ENCODE measurements at regions of chr16 and their contacts with region 1.

Region 1: DNA sequence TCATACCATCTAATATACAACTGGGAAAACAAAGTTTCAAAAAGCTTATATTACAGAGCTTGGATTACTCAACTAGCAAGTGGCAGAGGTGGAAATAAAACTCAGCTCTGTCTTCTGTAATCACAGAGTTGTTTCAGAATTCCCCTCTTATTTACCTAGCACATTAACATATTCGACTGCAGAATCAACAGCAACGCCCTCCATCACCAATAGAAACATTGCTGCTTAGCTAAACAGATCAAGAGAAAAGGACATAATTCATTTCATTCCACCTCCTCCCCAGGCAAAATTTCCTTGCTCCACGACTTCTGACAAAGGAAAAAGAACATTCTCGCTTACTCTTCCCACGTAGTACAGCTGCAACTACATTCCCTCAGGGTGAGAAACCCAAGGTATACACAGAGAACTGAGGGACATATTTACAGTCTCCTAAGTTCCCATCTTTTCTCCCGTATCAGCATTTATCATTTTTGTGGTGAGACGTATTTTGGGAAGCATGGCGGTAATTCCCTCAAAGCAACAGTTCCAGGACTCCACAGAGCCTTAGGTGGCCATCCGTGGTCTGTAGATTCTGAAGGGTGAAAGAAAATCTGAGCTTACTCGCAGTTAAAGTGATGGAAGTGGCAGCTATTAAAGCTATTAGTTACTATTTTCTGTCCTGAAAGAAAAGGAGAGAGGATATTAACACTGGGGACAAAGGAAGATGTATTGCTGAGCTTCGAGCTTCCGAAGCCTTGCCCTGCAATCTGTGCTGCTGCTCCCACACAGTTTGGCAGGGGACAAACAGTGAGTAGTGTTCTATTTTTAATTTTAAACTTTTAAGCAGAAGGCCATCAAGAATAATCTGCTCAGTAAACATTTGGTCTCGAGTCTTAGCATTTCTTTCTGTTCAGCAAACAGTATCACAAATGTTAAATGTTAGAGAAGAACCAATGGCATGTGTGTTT is 1296.2 kb downstream of the CDH8 start:
- DNase-seq: no peak
- H3K4me3 ChIP-seq: no peak overlapping the region
- H3K27ac ChIP-seq: no peak overlapping the region
- H3K4me1 ChIP-seq: no peaks in the 10 kb centered on the region
- H3K27me3 ChIP-seq: no peaks in the 10 kb centered on the region
- CTCF ChIP-seq: no peak

Region 2: GRCh38 chr16:60771138-60771537 is 31.1 kb after region 1 on chr16:
- intact Hi-C with region 1: loop called (anchors 1 kb)
- DNase-seq: no peak
- H3K4me3 ChIP-seq: no peak overlapping the region
- H3K27ac ChIP-seq: no peak overlapping the region
- H3K4me1 ChIP-seq: no peaks in the 10 kb centered on the region
- H3K27me3 ChIP-seq: no peaks in the 10 kb centered on the region
- CTCF ChIP-seq: no peak

Region 3: GRCh38 chr16:60788631-60789030 is 48.6 kb after region 1 on chr16:
- intact Hi-C with region 1: no loop called
- DNase-seq: no peak
- H3K4me3 ChIP-seq: no peak overlapping the region
- H3K27ac ChIP-seq: no peak overlapping the region
- H3K4me1 ChIP-seq: no peaks in the 10 kb centered on the region
- H3K27me3 ChIP-seq: no peaks in the 10 kb centered on the region
- CTCF ChIP-seq: no peak